Heart right ventricle (tissue), 16 donors: ENCODE measurements at regions of chr2 and their contacts with region 1.

Region 1: GRCh38 chr2:56132138-56132537 is 51.7 kb upstream of the CCDC85A start:
- DNase-seq: no peak
- ATAC-seq: no peak
- H3K4me3 ChIP-seq: no peak overlapping the region
- H3K27ac ChIP-seq: no peak overlapping the region
- H3K4me1 ChIP-seq: peaks cover 0 to 7% (median 0%) of the 10 kb centered on the region in 9 donors
- H3K27me3 ChIP-seq: peaks cover 0 to 4% (median 0%) of the 10 kb centered on the region in 7 donors
- CTCF ChIP-seq: peak in 8 of 9 donors; percentile 16 to 70 (median 52)

Region 2: DNA sequence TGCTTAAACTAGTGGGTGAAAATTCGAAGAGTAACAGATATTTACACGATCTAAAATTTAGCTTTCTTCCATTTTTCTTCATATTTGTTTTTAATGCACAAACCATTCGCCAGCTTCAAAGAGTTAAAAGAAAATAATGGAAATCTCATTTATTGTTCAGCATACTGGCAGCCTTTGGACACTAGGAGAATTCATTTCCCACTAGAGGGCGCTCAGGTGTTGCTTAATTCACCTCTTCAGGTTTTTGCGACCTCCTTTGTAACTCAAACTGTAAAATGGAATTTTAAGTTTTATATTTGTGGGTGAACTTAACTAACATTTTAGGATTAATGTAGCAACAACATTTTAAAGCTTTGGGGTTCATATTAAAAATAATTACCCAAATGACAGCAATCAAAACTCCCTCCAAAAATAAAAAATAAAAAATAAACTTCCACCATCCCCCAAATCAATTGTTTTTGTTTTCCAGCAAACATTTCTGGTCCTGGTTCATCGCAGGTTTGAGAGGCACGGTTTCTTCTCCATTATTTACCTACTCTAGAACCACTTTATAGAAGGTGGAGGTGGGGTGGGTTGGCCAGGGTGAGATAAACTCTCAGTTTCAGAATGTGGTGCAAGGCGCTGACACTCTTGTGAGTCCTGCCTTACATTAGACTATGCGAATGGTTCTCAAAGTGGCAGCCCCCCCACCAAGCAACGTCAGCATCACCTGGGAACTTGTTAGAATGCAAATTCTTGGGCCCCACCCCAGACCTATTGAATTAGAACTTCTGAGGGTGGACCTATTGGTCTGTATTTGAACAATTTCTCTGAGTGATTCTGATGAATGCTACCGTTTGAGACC is 413.8 kb before region 1 on chr2:
- intact Hi-C with region 1: loop called in 7 of 10 experiments (anchors 2 to 5 kb)
- DNase-seq: peak in 1 of 2 donors; percentile 54
- ATAC-seq: peak in 1 of 8 donors; percentile 54
- H3K4me3 ChIP-seq: no peak overlapping the region
- H3K27ac ChIP-seq: no peak overlapping the region
- H3K4me1 ChIP-seq: no peaks in the 10 kb centered on the region
- H3K27me3 ChIP-seq: peaks cover 0 to 13% (median 0%) of the 10 kb centered on the region in 7 donors
- CTCF ChIP-seq: peak; percentile 59 to 87 (median 85)

Region 3: GRCh38 chr2:55771612-55772011 is 360.5 kb before region 1 on chr2:
- intact Hi-C with region 1: loop called in 1 of 10 experiments (anchors 5 kb)
- DNase-seq: no peak
- ATAC-seq: no peak
- H3K4me3 ChIP-seq: no peak overlapping the region
- H3K27ac ChIP-seq: no peak overlapping the region
- H3K4me1 ChIP-seq: no peaks in the 10 kb centered on the region
- H3K27me3 ChIP-seq: peaks cover 0 to 10% (median 0%) of the 10 kb centered on the region in 7 donors
- CTCF ChIP-seq: peak; percentile 18 to 69 (median 64)

Region 4: GRCh38 chr2:57516698-57517340 is 1384.7 kb after region 1 on chr2:
- intact Hi-C with region 1: loop called in 2 of 10 experiments (anchors 5 kb)
- DNase-seq: no peak
- ATAC-seq: peak in 2 of 8 donors; percentile 50 to 55
- H3K4me3 ChIP-seq: no peak overlapping the region
- H3K27ac ChIP-seq: no peak overlapping the region
- H3K4me1 ChIP-seq: no peaks in the 10 kb centered on the region
- H3K27me3 ChIP-seq: no peaks in the 10 kb centered on the region
- CTCF ChIP-seq: peak; percentile 19 to 79 (median 63)